ENCODE measurements at regions of chr9 and their contacts with region 1.

Region 1: GRCh38 chr9:31669311-31669710 is 715.1 kb upstream of the ACO1 start:
- DNase-seq: no peak
- ATAC-seq: no peak
- H3K4me3 ChIP-seq: no peak overlapping the region
- H3K27ac ChIP-seq: no peak overlapping the region
- H3K4me1 ChIP-seq: no peaks in the 10 kb centered on the region
- H3K27me3 ChIP-seq: no peaks in the 10 kb centered on the region
- CTCF ChIP-seq: no peak
- EP300 ChIP-seq: no peak
- POLR2A ChIP-seq: no peak
- RAD21 ChIP-seq: no peak

Region 2: DNA sequence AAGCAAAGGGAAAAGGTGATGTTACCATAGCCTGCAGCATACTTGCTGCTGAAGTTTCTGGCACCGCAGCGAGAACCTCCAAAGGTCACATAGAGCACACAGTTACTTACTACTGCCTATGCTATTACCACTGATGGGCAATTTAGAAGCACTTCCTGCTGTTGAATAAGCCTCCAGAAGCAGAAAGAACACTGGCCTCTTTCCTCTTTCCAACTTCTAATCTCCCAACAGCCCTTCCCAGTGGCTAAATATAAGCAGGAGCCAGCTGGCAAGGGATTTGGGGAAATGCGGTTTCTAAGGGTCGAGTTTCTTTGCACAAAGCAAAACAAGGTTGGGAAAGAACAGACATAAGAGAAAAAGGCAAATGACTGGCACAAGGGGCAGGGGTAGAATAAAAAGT is 45.9 kb after region 1 on chr9:
- CTCF ChIA-PET with region 1: no interaction called
- POLR2A ChIA-PET with region 1: no interaction called
- RAD21 ChIA-PET with region 1: no interaction called
- SMC1A ChIA-PET with region 1: no interaction called
- in situ Hi-C with region 1: no loop called
- intact Hi-C with region 1: loop called (anchors 10 kb)
- DNase-seq: no peak
- ATAC-seq: no peak
- H3K4me3 ChIP-seq: no peak overlapping the region
- H3K27ac ChIP-seq: no peak overlapping the region
- H3K4me1 ChIP-seq: no peaks in the 10 kb centered on the region
- H3K27me3 ChIP-seq: no peaks in the 10 kb centered on the region
- CTCF ChIP-seq: no peak
- EP300 ChIP-seq: no peak
- POLR2A ChIP-seq: no peak
- RAD21 ChIP-seq: no peak